GM12878 (cell line): ENCODE measurements at regions of chr2 and their contacts with region 1.

Region 1: GRCh38 chr2:200901459-200902072 is 12.4 kb downstream of the NIF3L1 start:
- DNase-seq: peak; percentile 72
- ATAC-seq: peak; percentile 99
- H3K4me3 ChIP-seq: no peak overlapping the region
- H3K27ac ChIP-seq: no peak overlapping the region
- H3K4me1 ChIP-seq: no peaks in the 10 kb centered on the region
- H3K27me3 ChIP-seq: no peaks in the 10 kb centered on the region
- CTCF ChIP-seq: peak; percentile 71 to 90 (median 87); a peak in 5 of 6 replicates
- EP300 ChIP-seq: no peak
- POLR2A ChIP-seq: no peak
- RAD21 ChIP-seq: peak; percentile 76

Region 2: DNA sequence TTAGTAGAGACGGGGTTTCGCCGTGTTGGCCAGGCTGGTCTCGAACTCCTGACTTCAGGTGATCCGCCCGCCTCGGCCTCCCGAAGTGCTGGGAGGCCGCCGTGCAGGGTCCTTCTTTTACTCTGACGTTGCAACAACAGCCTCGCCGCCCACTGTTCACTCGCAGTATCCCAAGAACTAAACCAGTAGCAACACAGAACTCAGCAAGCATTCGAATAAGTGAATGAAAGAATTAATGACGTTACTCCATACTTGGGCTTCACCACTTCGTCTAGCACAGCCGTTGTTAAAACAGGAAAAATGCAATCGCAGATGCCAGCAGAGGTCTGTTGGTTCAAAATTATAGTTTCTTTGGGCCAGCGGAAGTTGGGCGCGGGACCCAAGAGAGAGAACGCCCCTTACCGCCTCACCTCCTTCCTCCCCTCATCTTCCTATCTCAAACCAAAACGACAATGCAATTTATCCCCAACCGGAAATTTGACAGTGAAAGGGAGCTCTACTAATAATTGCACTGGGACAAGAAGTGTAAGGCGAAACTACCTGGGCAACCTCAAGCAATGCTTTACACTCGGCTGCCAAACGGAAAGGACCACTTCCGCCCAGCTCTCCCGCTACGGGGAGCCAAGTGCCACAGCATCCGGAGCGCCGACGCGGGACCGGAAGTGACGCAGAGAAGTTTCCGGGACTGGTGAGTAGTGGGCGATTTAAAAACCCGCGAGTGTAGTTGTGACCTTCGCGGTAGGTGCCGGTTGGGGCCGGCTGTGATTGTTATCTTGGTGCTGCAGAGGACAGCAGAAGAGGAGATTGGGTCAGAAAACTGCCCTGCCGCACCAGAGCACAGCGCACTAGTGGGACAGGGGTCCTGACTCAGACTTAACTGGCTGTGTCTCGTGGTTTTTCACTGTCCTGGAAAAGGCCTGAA is 12.6 kb before region 1 on chr2 and contains the starts of genes NIF3L1 and PPIL3:
- CTCF ChIA-PET with region 1: interaction called, 5 read pairs
- POLR2A ChIA-PET with region 1: no interaction called
- RAD21 ChIA-PET with region 1: interaction called, 4 read pairs
- SMC1A ChIA-PET with region 1: interaction called, 14 read pairs
- in situ Hi-C with region 1: no loop called
- intact Hi-C with region 1: no loop called
- DNase-seq: peak; percentile 97
- ATAC-seq: peak; percentile 92
- H3K4me3 ChIP-seq: peak within 1 kb of the TSS; percentile 84
- H3K27ac ChIP-seq: peak within 1 kb of the TSS; percentile 85
- H3K4me1 ChIP-seq: peaks cover 11% of the 10 kb centered on the region
- H3K27me3 ChIP-seq: no peaks in the 10 kb centered on the region
- CTCF ChIP-seq: no peak
- EP300 ChIP-seq: peak in 1 of 2 experiments; percentile 64; a peak in 2 of 4 replicates
- POLR2A ChIP-seq: peak; percentile 82
- RAD21 ChIP-seq: no peak
- polyA plus RNA-seq, gene NIF3L1: 58.3 to 88.2 TPM
- polyA plus RNA-seq, gene PPIL3: 71.2 to 103 TPM

Region 3: DNA sequence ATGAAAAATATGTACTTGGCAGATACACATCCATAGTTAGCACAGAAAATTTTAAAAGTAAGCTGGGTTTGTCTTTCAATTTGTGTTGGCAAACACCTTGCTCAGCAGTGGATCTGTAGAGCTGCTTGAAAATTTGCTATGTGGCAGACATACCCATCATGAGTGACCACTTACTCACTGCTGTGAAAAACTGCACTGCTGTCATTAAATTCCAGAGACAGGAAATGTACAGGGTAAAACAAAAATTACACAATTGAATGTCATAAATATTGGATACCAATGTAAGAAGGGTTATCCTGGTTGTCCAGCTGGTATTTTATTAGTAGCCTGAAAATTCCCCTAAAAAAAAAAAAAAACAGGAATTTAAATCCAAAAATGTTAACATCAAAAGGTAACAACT is 12.1 kb after region 1 on chr2:
- CTCF ChIA-PET with region 1: interaction called, 13 read pairs
- POLR2A ChIA-PET with region 1: interaction called, 11 read pairs
- RAD21 ChIA-PET with region 1: interaction called, 3 read pairs
- SMC1A ChIA-PET with region 1: interaction called, 6 read pairs
- in situ Hi-C with region 1: no loop called
- intact Hi-C with region 1: no loop called
- DNase-seq: no peak
- ATAC-seq: no peak
- H3K4me3 ChIP-seq: no peak overlapping the region
- H3K27ac ChIP-seq: no peak overlapping the region
- H3K4me1 ChIP-seq: no peaks in the 10 kb centered on the region
- H3K27me3 ChIP-seq: no peaks in the 10 kb centered on the region
- CTCF ChIP-seq: no peak
- EP300 ChIP-seq: no peak
- POLR2A ChIP-seq: no peak
- RAD21 ChIP-seq: no peak

Region 4: DNA sequence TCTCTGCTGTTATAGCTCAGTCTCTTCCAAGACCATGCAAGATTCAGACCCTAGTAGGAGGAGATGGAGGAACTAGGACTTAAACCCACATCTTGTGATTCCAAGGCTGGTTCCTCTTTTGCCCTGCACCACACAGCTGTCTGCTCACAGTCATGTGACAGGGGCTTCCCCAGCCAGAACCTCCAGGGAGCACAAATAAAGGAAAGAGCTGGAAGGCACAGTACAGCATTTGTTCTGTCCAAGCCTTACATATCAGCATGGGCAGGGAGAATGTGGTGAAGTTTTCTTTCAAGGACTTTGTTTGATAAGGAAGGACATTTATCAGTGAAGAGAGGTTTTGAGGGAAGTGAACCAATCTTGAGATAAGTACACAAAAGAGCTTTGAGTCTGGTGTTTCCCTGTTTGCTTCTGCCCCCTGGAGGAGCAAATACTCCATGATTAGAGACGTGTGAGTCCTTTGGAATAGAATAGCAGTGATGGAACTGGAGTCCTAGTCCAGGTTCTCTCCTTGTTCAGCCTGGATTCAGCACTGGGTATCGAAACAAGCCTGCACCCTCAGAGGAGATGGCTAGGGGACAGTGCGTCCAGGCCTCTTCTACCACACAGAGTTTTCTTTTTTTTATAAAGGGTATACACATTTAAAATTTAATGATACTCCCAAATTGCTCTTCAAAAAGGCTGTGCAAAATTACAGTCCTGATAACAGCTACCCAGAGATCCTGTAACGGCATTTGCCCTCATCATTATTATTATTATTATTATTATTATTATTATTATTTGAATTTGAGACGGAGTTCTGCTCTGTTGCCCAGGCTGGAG is 256.8 kb after region 1 on chr2:
- CTCF ChIA-PET with region 1: interaction called, 22 read pairs
- POLR2A ChIA-PET with region 1: no interaction called
- RAD21 ChIA-PET with region 1: interaction called, 14 read pairs
- SMC1A ChIA-PET with region 1: interaction called, 20 read pairs
- in situ Hi-C with region 1: no loop called
- intact Hi-C with region 1: loop called (anchors 5 kb)
- DNase-seq: peak; percentile 77
- ATAC-seq: peak; percentile 98
- H3K4me3 ChIP-seq: no peak overlapping the region
- H3K27ac ChIP-seq: peak overlapping the region; percentile 35
- H3K4me1 ChIP-seq: peaks cover 14% of the 10 kb centered on the region
- H3K27me3 ChIP-seq: no peaks in the 10 kb centered on the region
- CTCF ChIP-seq: peak; percentile 62 to 76 (median 66)
- EP300 ChIP-seq: peak; percentile 59 to 70; a peak in 2 of 4 replicates
- POLR2A ChIP-seq: no peak
- RAD21 ChIP-seq: peak; percentile 77

Region 5: DNA sequence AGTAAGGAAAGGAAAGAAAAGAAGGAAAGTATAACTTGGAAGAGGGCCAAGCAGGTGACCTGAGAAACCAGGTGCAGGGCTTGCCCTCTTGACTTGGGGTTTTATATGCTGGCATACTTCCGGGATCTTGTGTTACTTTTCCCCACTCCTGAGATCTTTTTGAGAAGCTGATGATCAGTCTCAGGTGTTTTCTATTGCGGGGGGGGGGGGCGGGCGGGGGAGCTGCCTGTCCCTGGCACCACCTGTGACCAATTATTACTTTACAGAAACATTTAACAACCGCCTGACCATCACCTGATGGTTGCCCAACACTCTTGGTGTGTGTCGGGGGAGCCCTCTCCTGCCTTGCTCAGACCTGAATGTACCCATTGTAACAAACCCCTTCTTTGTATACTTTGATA is 274.5 kb after region 1 on chr2:
- CTCF ChIA-PET with region 1: interaction called, 81 read pairs
- POLR2A ChIA-PET with region 1: interaction called, 3 read pairs
- RAD21 ChIA-PET with region 1: interaction called, 57 read pairs
- SMC1A ChIA-PET with region 1: interaction called, 38 read pairs
- in situ Hi-C with region 1: loop called (anchors 5 kb)
- intact Hi-C with region 1: loop called (anchors 1 kb)
- DNase-seq: no peak
- ATAC-seq: no peak
- H3K4me3 ChIP-seq: no peak overlapping the region
- H3K27ac ChIP-seq: no peak overlapping the region
- H3K4me1 ChIP-seq: no peaks in the 10 kb centered on the region
- H3K27me3 ChIP-seq: no peaks in the 10 kb centered on the region
- CTCF ChIP-seq: no peak
- EP300 ChIP-seq: no peak
- POLR2A ChIP-seq: no peak
- RAD21 ChIP-seq: no peak